MCF 10A (cell line): ENCODE measurements at regions of chr5 and their contacts with region 1.

Region 1: GRCh38 chr5:167546270-167546669 is 745.2 kb upstream of the WWC1 start:
- DNase-seq: no peak
- H3K4me3 Mint-ChIP-seq: no peak overlapping the region
- H3K27ac Mint-ChIP-seq: no peak overlapping the region
- H3K4me1 Mint-ChIP-seq: no peaks in the 10 kb centered on the region
- H3K27me3 Mint-ChIP-seq: no peaks in the 10 kb centered on the region
- CTCF ChIP-seq: no peak

Region 2: GRCh38 chr5:166117072-166118066 is 1428.9 kb before region 1 on chr5:
- CTCF ChIA-PET with region 1: no interaction called
- POLR2A ChIA-PET with region 1: no interaction called
- intact Hi-C with region 1: loop called (anchors 5 kb)
- DNase-seq: peak; percentile 23
- H3K4me3 Mint-ChIP-seq: no peak overlapping the region
- H3K27ac Mint-ChIP-seq: no peak overlapping the region
- H3K4me1 Mint-ChIP-seq: peaks cover 7% of the 10 kb centered on the region
- H3K27me3 Mint-ChIP-seq: no peaks in the 10 kb centered on the region
- CTCF ChIP-seq: no peak

Region 3: GRCh38 chr5:167466992-167467391 is 79.3 kb before region 1 on chr5:
- CTCF ChIA-PET with region 1: no interaction called
- POLR2A ChIA-PET with region 1: no interaction called
- intact Hi-C with region 1: no loop called
- DNase-seq: no peak
- H3K4me3 Mint-ChIP-seq: no peak overlapping the region
- H3K27ac Mint-ChIP-seq: no peak overlapping the region
- H3K4me1 Mint-ChIP-seq: no peaks in the 10 kb centered on the region
- H3K27me3 Mint-ChIP-seq: no peaks in the 10 kb centered on the region
- CTCF ChIP-seq: no peak

Region 4: GRCh38 chr5:167533814-167534795 is 12.2 kb before region 1 on chr5:
- CTCF ChIA-PET with region 1: no interaction called
- POLR2A ChIA-PET with region 1: no interaction called
- intact Hi-C with region 1: no loop called
- DNase-seq: no peak
- H3K4me3 Mint-ChIP-seq: no peak overlapping the region
- H3K27ac Mint-ChIP-seq: no peak overlapping the region
- H3K4me1 Mint-ChIP-seq: no peaks in the 10 kb centered on the region
- H3K27me3 Mint-ChIP-seq: no peaks in the 10 kb centered on the region
- CTCF ChIP-seq: no peak

Region 5: DNA sequence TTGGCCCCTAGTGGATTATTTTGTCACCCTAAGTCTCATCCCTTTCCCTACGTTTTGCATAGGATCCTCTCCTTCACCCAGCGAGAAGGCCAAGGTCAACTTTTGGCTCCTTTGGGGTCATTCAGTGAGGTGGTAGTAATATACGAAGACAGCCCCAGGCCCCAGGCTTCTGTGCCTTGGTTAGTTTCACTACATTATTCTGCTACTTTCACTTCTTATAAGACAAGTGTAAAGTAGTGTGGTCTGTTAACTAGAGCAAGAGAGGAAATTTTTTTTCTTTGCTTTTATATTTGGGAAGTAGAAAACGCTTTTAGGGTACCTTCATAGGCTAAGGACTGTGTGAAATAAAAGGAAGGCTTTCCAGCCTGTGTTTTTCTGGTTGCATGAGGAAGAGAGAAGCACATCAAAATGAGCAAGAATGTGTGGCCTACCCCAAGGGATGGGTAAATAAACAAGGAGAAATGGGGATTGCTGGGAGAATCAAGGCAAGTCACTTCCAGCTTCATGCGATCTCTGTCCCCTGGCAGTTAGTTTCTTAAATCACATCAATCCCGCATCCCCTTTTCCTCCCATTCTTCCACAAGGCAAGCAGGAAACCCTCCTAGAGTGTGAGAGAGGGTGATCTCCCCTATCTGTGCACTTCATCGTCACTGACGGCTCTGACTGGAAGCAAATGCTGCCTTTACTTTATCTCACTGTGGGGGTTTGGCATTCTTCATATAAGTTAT is 68.2 kb after region 1 on chr5:
- CTCF ChIA-PET with region 1: no interaction called
- POLR2A ChIA-PET with region 1: no interaction called
- intact Hi-C with region 1: no loop called
- DNase-seq: no peak
- H3K4me3 Mint-ChIP-seq: no peak overlapping the region
- H3K27ac Mint-ChIP-seq: no peak overlapping the region
- H3K4me1 Mint-ChIP-seq: no peaks in the 10 kb centered on the region
- H3K27me3 Mint-ChIP-seq: no peaks in the 10 kb centered on the region
- CTCF ChIP-seq: no peak

Region 6: GRCh38 chr5:167814828-167815227 is 268.6 kb after region 1 on chr5:
- CTCF ChIA-PET with region 1: no interaction called
- POLR2A ChIA-PET with region 1: no interaction called
- intact Hi-C with region 1: no loop called
- DNase-seq: peak; percentile 95
- H3K4me3 Mint-ChIP-seq: peak overlapping the region; percentile 11
- H3K27ac Mint-ChIP-seq: peak overlapping the region; percentile 93
- H3K4me1 Mint-ChIP-seq: peaks cover 33% of the 10 kb centered on the region
- H3K27me3 Mint-ChIP-seq: no peaks in the 10 kb centered on the region
- CTCF ChIP-seq: no peak